B cell (primary cell): ENCODE measurements at regions of chr6 and their contacts with region 1.

Region 1: GRCh38 chr6:113858480-113859348 is 1.6 kb downstream of the MARCKS start:
- DNase-seq: peak; percentile 98
- ATAC-seq: peak; percentile 76
- H3K4me3 ChIP-seq: peak overlapping the region; percentile 83 to 100 (median 99)
- H3K4me3 Mint-ChIP-seq: peak overlapping the region; percentile 80
- H3K27ac ChIP-seq: peak overlapping the region; percentile 96 to 97
- H3K27ac Mint-ChIP-seq: peak overlapping the region; percentile 85
- H3K4me1 ChIP-seq: peaks cover 18 to 40% of the 10 kb centered on the region in 2 donors
- H3K4me1 Mint-ChIP-seq: peaks cover 22% of the 10 kb centered on the region
- H3K27me3 ChIP-seq: no peaks in the 10 kb centered on the region
- H3K27me3 Mint-ChIP-seq: no peaks in the 10 kb centered on the region
- CTCF ChIP-seq: peak; percentile 94

Region 2: GRCh38 chr6:112100561-112100960 is 1758.2 kb before region 1 on chr6:
- CTCF ChIA-PET with region 1: no interaction called
- POLR2A ChIA-PET with region 1: interaction called, 10 read pairs
- intact Hi-C with region 1: no loop called
- DNase-seq: no peak
- ATAC-seq: no peak
- H3K4me3 ChIP-seq: no peak overlapping the region
- H3K4me3 Mint-ChIP-seq: no peak overlapping the region
- H3K27ac ChIP-seq: no peak overlapping the region
- H3K27ac Mint-ChIP-seq: no peak overlapping the region
- H3K4me1 ChIP-seq: no peaks in the 10 kb centered on the region
- H3K4me1 Mint-ChIP-seq: no peaks in the 10 kb centered on the region
- H3K27me3 ChIP-seq: no peaks in the 10 kb centered on the region
- H3K27me3 Mint-ChIP-seq: peaks cover 3% of the 10 kb centered on the region
- CTCF ChIP-seq: no peak

Region 3: DNA sequence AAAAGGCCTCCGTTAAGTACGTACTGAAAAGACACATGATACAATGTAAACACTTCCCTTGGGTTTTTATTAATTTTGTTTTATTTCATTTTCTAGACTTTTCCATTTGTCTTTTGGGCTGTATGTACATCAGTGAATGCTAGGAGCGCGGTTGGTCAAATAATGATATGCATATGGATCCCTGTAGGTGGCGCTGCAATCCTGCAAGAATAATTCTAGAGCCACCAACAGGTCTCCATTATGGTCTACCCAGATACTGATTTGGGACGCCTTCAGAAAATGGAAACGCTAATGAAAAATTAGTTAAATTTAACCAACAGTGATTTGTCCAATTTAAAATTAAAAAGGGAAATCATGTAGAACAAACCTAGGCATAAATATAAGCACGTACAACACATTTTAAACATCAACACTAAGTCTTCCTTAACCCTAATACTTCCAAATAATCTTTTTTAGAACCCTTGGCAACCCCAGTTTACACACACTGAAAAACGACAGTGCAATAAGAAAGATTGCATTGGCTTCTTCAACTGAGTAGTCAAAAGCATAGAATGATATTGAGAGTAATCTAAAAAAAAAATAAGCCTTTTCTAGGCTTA is 1078.1 kb before region 1 on chr6:
- CTCF ChIA-PET with region 1: interaction called, 11 read pairs
- POLR2A ChIA-PET with region 1: no interaction called
- intact Hi-C with region 1: no loop called
- DNase-seq: peak; percentile 78
- ATAC-seq: peak; percentile 86
- H3K4me3 ChIP-seq: no peak overlapping the region
- H3K4me3 Mint-ChIP-seq: no peak overlapping the region
- H3K27ac ChIP-seq: no peak overlapping the region
- H3K27ac Mint-ChIP-seq: no peak overlapping the region
- H3K4me1 ChIP-seq: no peaks in the 10 kb centered on the region
- H3K4me1 Mint-ChIP-seq: no peaks in the 10 kb centered on the region
- H3K27me3 ChIP-seq: no peaks in the 10 kb centered on the region
- H3K27me3 Mint-ChIP-seq: no peaks in the 10 kb centered on the region
- CTCF ChIP-seq: peak; percentile 91

Region 4: GRCh38 chr6:113690281-113691259 is 168.1 kb before region 1 on chr6:
- CTCF ChIA-PET with region 1: interaction called, 4 read pairs
- POLR2A ChIA-PET with region 1: no interaction called
- intact Hi-C with region 1: loop called (anchors 1 kb)
- DNase-seq: no peak
- ATAC-seq: peak; percentile 43
- H3K4me3 ChIP-seq: no peak overlapping the region
- H3K4me3 Mint-ChIP-seq: peak overlapping the region; percentile 16
- H3K27ac ChIP-seq: no peak overlapping the region
- H3K27ac Mint-ChIP-seq: peak overlapping the region; percentile 1
- H3K4me1 ChIP-seq: no peaks in the 10 kb centered on the region
- H3K4me1 Mint-ChIP-seq: peaks cover 15% of the 10 kb centered on the region
- H3K27me3 ChIP-seq: no peaks in the 10 kb centered on the region
- H3K27me3 Mint-ChIP-seq: no peaks in the 10 kb centered on the region
- CTCF ChIP-seq: no peak

Region 5: GRCh38 chr6:113873043-113873667 is 14.4 kb after region 1 on chr6:
- CTCF ChIA-PET with region 1: interaction called, 45 read pairs
- POLR2A ChIA-PET with region 1: interaction called, 5 read pairs
- intact Hi-C with region 1: no loop called
- DNase-seq: peak; percentile 77
- ATAC-seq: peak; percentile 98
- H3K4me3 ChIP-seq: peak overlapping the region in 4 of 5 experiments; percentile 16 to 61 (median 42)
- H3K4me3 Mint-ChIP-seq: peak overlapping the region; percentile 93
- H3K27ac ChIP-seq: peak overlapping the region in 1 of 2 donors; percentile 55
- H3K27ac Mint-ChIP-seq: peak overlapping the region; percentile 90
- H3K4me1 ChIP-seq: peaks cover 7 to 8% of the 10 kb centered on the region in 2 donors
- H3K4me1 Mint-ChIP-seq: peaks cover 14% of the 10 kb centered on the region
- H3K27me3 ChIP-seq: no peaks in the 10 kb centered on the region
- H3K27me3 Mint-ChIP-seq: no peaks in the 10 kb centered on the region
- CTCF ChIP-seq: no peak